PC-9 (cell line): ENCODE measurements at regions of chr19 and their contacts with region 1.

Region 1: GRCh38 chr19:40305403-40305802 is 20.3 kb upstream of the AKT2 start:
- DNase-seq: peak; percentile 67 to 74
- H3K4me3 ChIP-seq: no peak overlapping the region
- H3K27ac ChIP-seq: no peak overlapping the region
- H3K4me1 ChIP-seq: no peaks in the 10 kb centered on the region
- H3K27me3 ChIP-seq: no peaks in the 10 kb centered on the region
- CTCF ChIP-seq: peak; percentile 86

Region 2: GRCh38 chr19:40084948-40085347 is 220.5 kb before region 1 on chr19:
- CTCF ChIA-PET with region 1: interaction called, 12 read pairs
- POLR2A ChIA-PET with region 1: no interaction called
- intact Hi-C with region 1: no loop called
- DNase-seq: no peak
- H3K4me3 ChIP-seq: no peak overlapping the region
- H3K27ac ChIP-seq: no peak overlapping the region
- H3K4me1 ChIP-seq: peaks cover 10% of the 10 kb centered on the region
- H3K27me3 ChIP-seq: no peaks in the 10 kb centered on the region
- CTCF ChIP-seq: no peak

Region 3: GRCh38 chr19:40241809-40242384 is 63.5 kb before region 1 on chr19:
- CTCF ChIA-PET with region 1: no interaction called
- POLR2A ChIA-PET with region 1: no interaction called
- intact Hi-C with region 1: no loop called
- DNase-seq: no peak
- H3K4me3 ChIP-seq: no peak overlapping the region
- H3K27ac ChIP-seq: no peak overlapping the region
- H3K4me1 ChIP-seq: no peaks in the 10 kb centered on the region
- H3K27me3 ChIP-seq: no peaks in the 10 kb centered on the region
- CTCF ChIP-seq: no peak

Region 4: DNA sequence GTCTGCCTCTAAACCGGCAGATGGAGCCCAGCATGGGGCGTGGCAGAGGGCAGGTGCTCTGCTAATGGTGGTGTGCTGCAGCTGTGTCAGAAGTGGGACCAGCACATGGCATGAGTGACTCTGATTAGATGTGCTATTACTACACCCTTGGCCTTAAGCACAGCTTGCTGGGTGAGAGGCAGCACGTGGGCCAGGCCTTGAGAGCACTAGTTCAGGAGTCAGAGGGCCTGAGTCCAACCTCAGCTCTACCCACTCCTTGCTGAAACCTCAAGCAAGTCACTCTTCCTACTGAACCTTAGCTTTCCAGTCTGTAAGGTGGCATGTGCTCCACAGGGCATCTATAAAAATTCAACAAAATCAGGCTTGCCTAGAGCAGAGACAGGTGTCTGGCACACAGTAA is 43.0 kb before region 1 on chr19:
- CTCF ChIA-PET with region 1: no interaction called
- POLR2A ChIA-PET with region 1: no interaction called
- intact Hi-C with region 1: no loop called
- DNase-seq: no peak
- H3K4me3 ChIP-seq: no peak overlapping the region
- H3K27ac ChIP-seq: no peak overlapping the region
- H3K4me1 ChIP-seq: peaks cover 5% of the 10 kb centered on the region
- H3K27me3 ChIP-seq: no peaks in the 10 kb centered on the region
- CTCF ChIP-seq: no peak

Region 5: GRCh38 chr19:40523322-40524047 is 218.1 kb after region 1 on chr19:
- CTCF ChIA-PET with region 1: interaction called, 7 read pairs
- POLR2A ChIA-PET with region 1: interaction called, 18 read pairs
- intact Hi-C with region 1: loop called (anchors 1 kb)
- DNase-seq: peak; percentile 61 to 75
- H3K4me3 ChIP-seq: no peak overlapping the region
- H3K27ac ChIP-seq: no peak overlapping the region
- H3K4me1 ChIP-seq: no peaks in the 10 kb centered on the region
- H3K27me3 ChIP-seq: peaks cover 4% of the 10 kb centered on the region; the same call in 1 of the 2 replicates
- CTCF ChIP-seq: peak; percentile 70

Region 6: GRCh38 chr19:40598121-40598917 is 292.9 kb after region 1 on chr19:
- CTCF ChIA-PET with region 1: interaction called, 13 read pairs
- POLR2A ChIA-PET with region 1: no interaction called
- intact Hi-C with region 1: loop called (anchors 2 kb)
- DNase-seq: peak; percentile 60 to 89
- H3K4me3 ChIP-seq: no peak overlapping the region
- H3K27ac ChIP-seq: no peak overlapping the region
- H3K4me1 ChIP-seq: peaks cover 32% of the 10 kb centered on the region
- H3K27me3 ChIP-seq: peaks cover 35% of the 10 kb centered on the region
- CTCF ChIP-seq: peak; percentile 96

Region 7: GRCh38 chr19:40609561-40610395 is 304.4 kb after region 1 on chr19:
- CTCF ChIA-PET with region 1: no interaction called
- POLR2A ChIA-PET with region 1: interaction called, 11 read pairs
- intact Hi-C with region 1: no loop called
- DNase-seq: peak; percentile 77 to 95
- H3K4me3 ChIP-seq: peak overlapping the region; percentile 63
- H3K27ac ChIP-seq: no peak overlapping the region
- H3K4me1 ChIP-seq: peaks cover 18% of the 10 kb centered on the region
- H3K27me3 ChIP-seq: no peaks in the 10 kb centered on the region
- CTCF ChIP-seq: no peak